SK-N-SH (cell line): ENCODE measurements at regions of chr9 and their contacts with region 1.

Region 1: GRCh38 chr9:90642570-90643539 is at the start of gene DIRAS2:
- DNase-seq: peak; percentile 85
- H3K4me3 ChIP-seq: peak within 1 kb of the TSS; percentile 47 to 60
- H3K27ac ChIP-seq: no peak within 1 kb of the TSS
- H3K4me1 ChIP-seq: peaks cover 0 to 5% of the 10 kb centered on the region in 2 experiments; a peak in 2 of 4 replicates
- H3K27me3 ChIP-seq: no peaks in the 10 kb centered on the region
- CTCF ChIP-seq: peak; percentile 48
- EP300 ChIP-seq: no peak
- RAD21 ChIP-seq: peak; percentile 70
- polyA plus RNA-seq, gene DIRAS2: not detected in 2 replicates

Region 2: DNA sequence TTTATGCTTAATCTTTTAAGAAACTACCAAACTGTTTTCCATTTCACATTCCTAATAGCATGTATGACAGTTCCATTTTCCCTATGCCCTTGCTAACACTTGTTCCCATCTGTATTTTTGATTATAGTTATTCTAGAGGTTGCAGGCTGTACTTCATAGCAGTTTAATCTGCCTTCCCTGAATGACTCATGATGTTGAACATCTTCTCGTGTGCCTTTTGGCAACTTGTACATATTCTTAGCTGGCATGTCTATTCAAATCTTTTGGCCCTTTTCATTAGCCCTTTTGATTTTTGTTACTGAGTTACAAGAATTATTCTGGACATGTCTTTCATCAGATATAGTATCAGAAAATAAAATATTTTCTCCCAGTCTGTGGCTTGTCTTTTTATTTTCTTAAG is 320.6 kb before region 1 on chr9:
- CTCF ChIA-PET with region 1: interaction called, 13 read pairs
- POLR2A ChIA-PET with region 1: no interaction called
- DNase-seq: no peak
- H3K4me3 ChIP-seq: no peak overlapping the region
- H3K27ac ChIP-seq: no peak overlapping the region
- H3K4me1 ChIP-seq: no peaks in the 10 kb centered on the region; a peak in 1 of 4 replicates
- H3K27me3 ChIP-seq: no peaks in the 10 kb centered on the region
- CTCF ChIP-seq: no peak
- EP300 ChIP-seq: no peak
- RAD21 ChIP-seq: no peak